ENCODE measurements at regions of chr10 and their contacts with region 1.

Region 1: DNA sequence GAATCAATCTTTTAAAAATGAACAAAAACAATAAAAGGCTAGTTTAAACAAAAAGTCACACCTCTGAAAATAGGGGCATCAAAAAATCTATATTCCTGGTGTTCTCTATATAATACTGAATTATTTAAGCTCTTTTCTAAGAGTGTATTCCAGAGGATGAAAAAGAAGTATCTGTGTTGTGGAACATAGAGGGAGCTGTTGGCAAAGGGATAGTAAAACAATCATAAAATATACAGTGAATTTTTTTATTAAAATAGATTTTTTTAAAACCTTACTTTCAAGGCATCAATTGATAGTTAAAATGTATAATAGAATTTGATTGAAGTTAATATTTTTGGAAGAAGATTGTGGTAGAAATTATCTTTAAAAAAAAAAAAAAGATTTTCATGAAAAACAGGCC is 1409.1 kb upstream of the CELF2 start:
- DNase-seq: no peak
- H3K4me3 ChIP-seq: no peak overlapping the region
- H3K27ac ChIP-seq: no peak overlapping the region
- H3K4me1 ChIP-seq: no peaks in the 10 kb centered on the region
- H3K27me3 ChIP-seq: no peaks in the 10 kb centered on the region
- CTCF ChIP-seq: no peak
- POLR2A ChIP-seq: no peak

Region 2: GRCh38 chr10:11270135-11270857 is 1661.7 kb after region 1 on chr10:
- intact Hi-C with region 1: loop called (anchors 10 kb)
- DNase-seq: peak; percentile 48 to 66
- H3K4me3 ChIP-seq: no peak overlapping the region
- H3K27ac ChIP-seq: no peak overlapping the region
- H3K4me1 ChIP-seq: no peaks in the 10 kb centered on the region
- H3K27me3 ChIP-seq: no peaks in the 10 kb centered on the region
- CTCF ChIP-seq: peak in 2 of 3 donors; percentile 67 to 72
- POLR2A ChIP-seq: no peak